ENCODE measurements at regions of chr11 and their contacts with region 1.

Region 1: GRCh38 chr11:123261345-123262106 is 66.5 kb upstream of the CLMP start:
- DNase-seq: peak; percentile 92

Region 2: GRCh38 chr11:123103326-123103980 is 158.1 kb before region 1 on chr11:
- CTCF ChIA-PET with region 1: interaction called, 27 read pairs
- POLR2A ChIA-PET with region 1: interaction called, 3 read pairs
- DNase-seq: peak; percentile 62

Region 3: GRCh38 chr11:123110356-123110755 is 151.2 kb before region 1 on chr11:
- CTCF ChIA-PET with region 1: interaction called, 16 read pairs
- POLR2A ChIA-PET with region 1: no interaction called
- DNase-seq: no peak

Region 4: GRCh38 chr11:123246749-123247495 is 14.6 kb before region 1 on chr11:
- CTCF ChIA-PET with region 1: interaction called, 28 read pairs
- POLR2A ChIA-PET with region 1: interaction called, 6 read pairs
- DNase-seq: peak; percentile 86

Region 5: GRCh38 chr11:123272565-123272964 is 11.0 kb after region 1 on chr11:
- CTCF ChIA-PET with region 1: interaction called, 18 read pairs
- POLR2A ChIA-PET with region 1: no interaction called
- DNase-seq: no peak